Psoas muscle (tissue), 8 donors: ENCODE measurements at regions of chrX and their contacts with region 1.

Region 1: GRCh38 chrX:70454441-70455365 is 10.1 kb downstream of the DLG3 start:
- DNase-seq: peak in 1 of 2 donors; percentile 47
- ATAC-seq: peak; percentile 50 to 76 (median 64)
- H3K4me3 ChIP-seq: peak overlapping the region; percentile 48
- H3K27ac ChIP-seq: no peak overlapping the region
- H3K4me1 ChIP-seq: no peaks in the 10 kb centered on the region
- H3K27me3 ChIP-seq: peaks cover 0 to 22% (median 0%) of the 10 kb centered on the region in 3 donors
- CTCF ChIP-seq: peak; percentile 54

Region 2: GRCh38 chrX:70554948-70555347 is 100.2 kb after region 1 on chrX:
- intact Hi-C with region 1: loop called in 1 of 2 experiments (anchors 5 kb)
- DNase-seq: no peak
- ATAC-seq: no peak
- H3K4me3 ChIP-seq: no peak overlapping the region
- H3K27ac ChIP-seq: no peak overlapping the region
- H3K4me1 ChIP-seq: no peaks in the 10 kb centered on the region
- H3K27me3 ChIP-seq: no peaks in the 10 kb centered on the region
- CTCF ChIP-seq: no peak

Region 3: GRCh38 chrX:70664726-70665125 is 210.0 kb after region 1 on chrX:
- intact Hi-C with region 1: loop called in 1 of 2 experiments (anchors 10 kb)
- DNase-seq: no peak
- ATAC-seq: no peak
- H3K4me3 ChIP-seq: no peak overlapping the region
- H3K27ac ChIP-seq: no peak overlapping the region
- H3K4me1 ChIP-seq: no peaks in the 10 kb centered on the region
- H3K27me3 ChIP-seq: peaks cover 0 to 16% (median 0%) of the 10 kb centered on the region in 3 donors
- CTCF ChIP-seq: no peak